Dendritic cell treated with granulocyte-macrophage colony-stimulating factor and Interleukin-4, amounts not matched to agents 40 ng/mL and 50 ng/mL, for 4 days (primary cell): ENCODE measurements at regions of chr10 and their contacts with region 1.

Region 1: GRCh38 chr10:16436758-16437539 is at the start of gene PTER:
- H3K4me3 Mint-ChIP-seq: peak within 1 kb of the TSS; percentile 85
- H3K27ac Mint-ChIP-seq: peak within 1 kb of the TSS; percentile 94
- H3K4me1 Mint-ChIP-seq: peaks cover 37% of the 10 kb centered on the region
- H3K27me3 Mint-ChIP-seq: peaks cover 9% of the 10 kb centered on the region

Region 2: GRCh38 chr10:15859906-15860691 is 576.9 kb before region 1 on chr10 and contains the start of gene MINDY3:
- intact Hi-C with region 1: loop called (anchors 5 kb)
- H3K4me3 Mint-ChIP-seq: peak within 1 kb of the TSS; percentile 100
- H3K27ac Mint-ChIP-seq: peak within 1 kb of the TSS; percentile 94
- H3K4me1 Mint-ChIP-seq: peaks cover 26% of the 10 kb centered on the region
- H3K27me3 Mint-ChIP-seq: peaks cover 14% of the 10 kb centered on the region

Region 3: DNA sequence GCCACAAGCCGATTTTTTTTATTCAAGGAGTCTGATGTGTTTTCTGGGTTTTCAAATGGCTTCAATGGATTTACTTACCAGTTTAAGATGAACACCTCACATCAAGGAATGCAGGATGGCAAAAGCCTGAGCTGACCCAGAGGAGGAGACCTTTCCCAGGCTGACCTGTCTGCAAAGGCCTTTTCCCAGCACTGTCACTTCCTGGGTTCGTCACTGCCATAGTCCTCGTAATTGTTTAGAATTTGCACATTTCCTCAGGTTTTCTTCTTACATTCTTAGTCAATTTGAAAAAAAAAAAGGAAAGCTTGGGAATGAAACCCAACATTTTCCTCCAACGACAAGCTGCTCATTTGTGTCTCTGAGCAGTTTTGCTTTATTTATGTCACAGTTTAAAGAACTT is 41.9 kb after region 1 on chr10:
- intact Hi-C with region 1: no loop called
- H3K4me3 Mint-ChIP-seq: no peak overlapping the region
- H3K27ac Mint-ChIP-seq: no peak overlapping the region
- H3K4me1 Mint-ChIP-seq: no peaks in the 10 kb centered on the region
- H3K27me3 Mint-ChIP-seq: no peaks in the 10 kb centered on the region

Region 4: GRCh38 chr10:16777473-16778370 is 340.8 kb after region 1 on chr10:
- intact Hi-C with region 1: no loop called
- H3K4me3 Mint-ChIP-seq: no peak overlapping the region
- H3K27ac Mint-ChIP-seq: no peak overlapping the region
- H3K4me1 Mint-ChIP-seq: peaks cover 5% of the 10 kb centered on the region
- H3K27me3 Mint-ChIP-seq: no peaks in the 10 kb centered on the region

Region 5: DNA sequence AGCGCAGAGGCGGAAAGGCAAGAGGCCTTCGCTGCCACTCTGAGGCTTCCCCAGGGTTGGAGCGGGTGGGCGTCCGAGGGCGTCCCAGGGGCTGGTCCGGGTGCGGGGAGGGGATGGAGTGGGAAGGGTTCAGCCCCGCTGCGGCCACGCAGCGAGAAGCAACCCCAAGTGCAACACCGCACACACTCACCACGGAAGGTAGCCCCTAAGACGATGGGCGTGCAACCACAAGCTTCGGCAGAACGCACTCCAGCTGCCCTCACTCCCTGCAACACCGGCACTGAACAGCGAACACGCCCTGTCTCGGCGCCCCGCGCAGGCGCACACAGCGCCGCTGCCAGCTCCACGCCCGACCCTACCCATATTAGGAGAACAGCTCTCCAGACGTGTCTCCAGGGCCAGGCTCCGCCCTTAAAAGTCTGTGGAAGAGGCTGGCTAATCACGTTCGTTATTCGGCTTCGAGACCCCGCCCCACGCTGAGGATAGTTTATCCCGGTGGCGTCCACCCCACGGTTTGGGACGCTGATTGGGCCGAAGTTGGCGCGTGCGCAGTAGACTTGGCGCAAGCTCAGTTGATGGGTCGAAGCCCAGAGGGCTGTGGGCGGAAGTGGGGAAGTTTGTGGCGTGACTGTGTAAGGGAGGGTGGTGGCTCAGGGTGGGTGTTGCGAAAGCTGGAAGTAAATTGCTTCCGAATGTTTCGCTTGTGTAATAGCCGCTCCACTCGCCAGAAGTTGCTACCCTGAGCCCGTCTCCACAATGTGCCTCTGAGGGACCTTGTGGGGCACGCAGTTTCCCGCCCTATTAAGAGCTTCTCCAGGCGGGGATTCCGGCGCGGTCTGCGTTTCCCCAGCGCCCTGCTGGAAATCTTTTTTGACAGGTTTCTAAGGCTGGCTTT is 380.4 kb after region 1 on chr10 and contains the start of gene RSU1:
- intact Hi-C with region 1: loop called (anchors 1 kb)
- H3K4me3 Mint-ChIP-seq: peak within 1 kb of the TSS; percentile 84
- H3K27ac Mint-ChIP-seq: peak within 1 kb of the TSS; percentile 83
- H3K4me1 Mint-ChIP-seq: peaks cover 67% of the 10 kb centered on the region
- H3K27me3 Mint-ChIP-seq: no peaks in the 10 kb centered on the region